Activated CD4-positive, alpha-beta T cell treated with anti-CD3 and anti-CD28 coated beads, Interleukin-2, amount 10 ng/mL, durations not matched to agents 7 days and 5 days (primary cell): ENCODE measurements at regions of chr7 and their contacts with region 1.

Region 1: DNA sequence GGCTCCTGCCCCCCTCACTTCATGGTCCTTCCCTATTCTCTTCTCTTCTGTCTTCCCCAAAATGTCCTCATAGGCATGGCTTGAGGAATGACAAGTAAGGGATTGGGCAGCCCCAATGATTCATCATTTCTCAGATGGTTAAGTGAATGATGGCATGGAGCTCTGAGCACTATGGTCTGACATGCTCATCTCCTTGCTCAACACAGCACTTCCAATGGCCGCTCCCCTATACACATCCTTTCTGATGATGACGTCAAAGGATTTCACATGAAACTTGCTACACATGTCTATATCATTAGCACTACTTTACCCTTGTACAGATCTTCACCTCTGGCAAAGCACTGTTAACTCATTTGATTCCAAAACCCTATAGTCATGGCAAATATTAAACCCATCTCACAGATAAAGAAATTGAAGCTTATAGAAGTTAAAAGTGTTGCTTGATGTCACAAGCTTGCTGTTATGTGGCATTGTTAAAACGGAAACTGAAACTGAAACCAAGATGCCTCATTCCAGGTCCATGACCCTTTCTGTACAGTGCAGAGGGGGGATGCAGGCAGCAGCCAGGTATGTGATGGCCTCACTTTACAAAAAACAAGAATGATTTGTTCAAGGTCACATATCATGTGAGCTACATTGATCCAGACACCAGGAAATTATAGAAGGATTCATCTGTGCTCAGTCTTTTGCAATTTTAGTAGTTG is 90.0 kb upstream of the PLXNA4 start:
- DNase-seq: peak; percentile 46
- H3K4me3 Mint-ChIP-seq: no peak overlapping the region
- H3K27ac Mint-ChIP-seq: peak overlapping the region; percentile 84
- H3K4me1 Mint-ChIP-seq: peaks cover 13% of the 10 kb centered on the region
- H3K27me3 Mint-ChIP-seq: no peaks in the 10 kb centered on the region

Region 2: GRCh38 chr7:132654150-132654549 is 12.1 kb before region 1 on chr7:
- CTCF ChIA-PET with region 1: interaction called, 12 read pairs
- POLR2A ChIA-PET with region 1: no interaction called
- DNase-seq: no peak
- H3K4me3 Mint-ChIP-seq: no peak overlapping the region
- H3K27ac Mint-ChIP-seq: no peak overlapping the region
- H3K4me1 Mint-ChIP-seq: peaks cover 29% of the 10 kb centered on the region
- H3K27me3 Mint-ChIP-seq: no peaks in the 10 kb centered on the region